HCT116 (cell line): ENCODE measurements at regions of chr15 and their contacts with region 1.

Region 1: GRCh38 chr15:89057504-89058133 is 30.6 kb upstream of the ABHD2 start:
- DNase-seq: peak; percentile 45
- ATAC-seq: peak; percentile 98
- H3K4me3 ChIP-seq: no peak overlapping the region
- H3K27ac ChIP-seq: no peak overlapping the region
- H3K4me1 ChIP-seq: peaks cover 0 to 6% of the 10 kb centered on the region in 2 experiments; a peak in 1 of 4 replicates
- H3K27me3 ChIP-seq: no peaks in the 10 kb centered on the region
- CTCF ChIP-seq: peak; percentile 98 to 99 (median 99)
- POLR2A ChIP-seq: no peak
- RAD21 ChIP-seq: peak; percentile 97

Region 2: GRCh38 chr15:89098281-89098680 is 40.7 kb after region 1 on chr15:
- CTCF ChIA-PET with region 1: no interaction called
- POLR2A ChIA-PET with region 1: no interaction called
- RAD21 ChIA-PET with region 1: no interaction called
- intact Hi-C with region 1: no loop called
- DNase-seq: no peak
- ATAC-seq: no peak
- H3K4me3 ChIP-seq: no peak overlapping the region
- H3K27ac ChIP-seq: no peak overlapping the region
- H3K4me1 ChIP-seq: peaks cover 23 to 34% of the 10 kb centered on the region in 2 experiments
- H3K27me3 ChIP-seq: no peaks in the 10 kb centered on the region
- CTCF ChIP-seq: no peak
- POLR2A ChIP-seq: no peak
- RAD21 ChIP-seq: no peak

Region 3: GRCh38 chr15:89299896-89300295 is 242.3 kb after region 1 on chr15:
- CTCF ChIA-PET with region 1: interaction called, 8 read pairs
- POLR2A ChIA-PET with region 1: no interaction called
- RAD21 ChIA-PET with region 1: no interaction called
- intact Hi-C with region 1: loop called (anchors 10 kb)
- DNase-seq: peak; percentile 16
- ATAC-seq: peak; percentile 58; the same call in 1 of the 2 replicates
- H3K4me3 ChIP-seq: no peak overlapping the region
- H3K27ac ChIP-seq: no peak overlapping the region
- H3K4me1 ChIP-seq: no peaks in the 10 kb centered on the region
- H3K27me3 ChIP-seq: no peaks in the 10 kb centered on the region
- CTCF ChIP-seq: peak in 2 of 3 experiments; percentile 24 to 43; a peak in 2 of 6 replicates
- POLR2A ChIP-seq: no peak
- RAD21 ChIP-seq: peak; percentile 59

Region 4: DNA sequence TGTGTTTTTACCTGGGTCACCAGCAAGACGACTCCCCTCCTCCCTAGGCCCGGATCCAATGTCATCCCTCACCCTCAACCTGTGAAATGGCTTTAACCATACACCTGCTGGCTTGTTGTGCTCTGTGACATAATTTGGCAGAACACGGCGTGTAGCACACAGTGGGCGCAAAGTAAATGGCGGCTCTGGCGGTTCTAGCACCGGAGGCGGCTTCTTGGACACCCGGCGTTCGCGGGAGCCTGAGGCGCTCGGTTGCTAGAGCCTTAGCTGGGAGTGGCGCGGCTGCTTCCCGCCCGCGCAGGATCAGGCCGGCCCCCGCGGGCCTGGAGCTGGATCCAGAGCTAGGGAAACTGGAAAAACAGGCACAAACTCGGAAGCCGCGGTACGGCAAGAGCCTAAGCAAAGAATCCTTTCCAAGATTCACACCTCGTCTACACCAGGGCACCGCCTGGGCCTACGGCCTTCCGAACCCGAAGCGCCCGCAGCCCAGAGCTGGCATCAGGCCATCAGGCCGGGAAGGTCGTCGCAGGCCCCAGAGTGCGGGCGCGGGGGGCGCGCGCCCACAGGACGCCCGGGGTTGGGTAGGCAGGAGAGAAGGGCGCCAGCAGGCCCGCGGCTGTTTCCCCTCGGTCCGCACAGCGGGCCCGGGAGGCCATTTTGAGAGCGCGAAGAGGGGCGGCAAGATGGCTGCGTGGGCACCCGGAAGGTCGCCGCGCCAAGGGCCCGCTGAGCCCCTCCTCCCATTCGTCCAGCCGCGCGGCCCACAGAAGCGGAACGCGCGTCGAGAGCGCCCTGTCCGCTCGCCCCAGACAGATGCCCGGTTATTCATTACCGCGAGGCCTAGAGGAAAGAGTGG is 320.9 kb after region 1 on chr15:
- CTCF ChIA-PET with region 1: no interaction called
- POLR2A ChIA-PET with region 1: no interaction called
- RAD21 ChIA-PET with region 1: no interaction called
- intact Hi-C with region 1: no loop called
- DNase-seq: no peak
- ATAC-seq: no peak
- H3K4me3 ChIP-seq: no peak overlapping the region
- H3K27ac ChIP-seq: no peak overlapping the region
- H3K4me1 ChIP-seq: peaks cover 0 to under 1% of the 10 kb centered on the region in 2 experiments; a peak in 2 of 4 replicates
- H3K27me3 ChIP-seq: 0 out of 2 replicates have a peak, but pooled peaks cover 3% of the 10 kb centered on the region
- CTCF ChIP-seq: no peak
- POLR2A ChIP-seq: no peak
- RAD21 ChIP-seq: no peak

Region 5: GRCh38 chr15:89704411-89704810 is 646.8 kb after region 1 on chr15:
- CTCF ChIA-PET with region 1: no interaction called
- POLR2A ChIA-PET with region 1: no interaction called
- RAD21 ChIA-PET with region 1: no interaction called
- intact Hi-C with region 1: no loop called
- DNase-seq: no peak
- ATAC-seq: no peak
- H3K4me3 ChIP-seq: no peak overlapping the region
- H3K27ac ChIP-seq: no peak overlapping the region
- H3K4me1 ChIP-seq: no peaks in the 10 kb centered on the region
- H3K27me3 ChIP-seq: no peaks in the 10 kb centered on the region
- CTCF ChIP-seq: no peak
- POLR2A ChIP-seq: no peak
- RAD21 ChIP-seq: no peak